Activated CD4-positive, alpha-beta T cell treated with anti-CD3 and anti-CD28 coated beads for 36 hours (primary cell): ENCODE measurements at regions of chr1 and their contacts with region 1.

Region 1: GRCh38 chr1:227563324-227564201 is at the start of gene ZNF678:
- DNase-seq: peak; percentile 95
- ATAC-seq: peak; percentile 96
- H3K4me3 Mint-ChIP-seq: peak within 1 kb of the TSS; percentile 90
- H3K27ac Mint-ChIP-seq: peak within 1 kb of the TSS; percentile 93
- H3K4me1 Mint-ChIP-seq: peaks cover 34% of the 10 kb centered on the region
- H3K27me3 Mint-ChIP-seq: peaks cover 25% of the 10 kb centered on the region
- total RNA-seq, gene ZNF678: 7.0 to 7.7 TPM

Region 2: GRCh38 chr1:227542143-227543120 is 21.1 kb before region 1 on chr1:
- CTCF ChIA-PET with region 1: interaction called, 5 read pairs
- POLR2A ChIA-PET with region 1: interaction called, 3 read pairs
- intact Hi-C with region 1: loop called (anchors 1 to 2 kb)
- DNase-seq: peak; percentile 95
- ATAC-seq: peak; percentile 97
- H3K4me3 Mint-ChIP-seq: peak overlapping the region; percentile 47
- H3K27ac Mint-ChIP-seq: peak overlapping the region; percentile 72
- H3K4me1 Mint-ChIP-seq: peaks cover 4% of the 10 kb centered on the region
- H3K27me3 Mint-ChIP-seq: no peaks in the 10 kb centered on the region

Region 3: DNA sequence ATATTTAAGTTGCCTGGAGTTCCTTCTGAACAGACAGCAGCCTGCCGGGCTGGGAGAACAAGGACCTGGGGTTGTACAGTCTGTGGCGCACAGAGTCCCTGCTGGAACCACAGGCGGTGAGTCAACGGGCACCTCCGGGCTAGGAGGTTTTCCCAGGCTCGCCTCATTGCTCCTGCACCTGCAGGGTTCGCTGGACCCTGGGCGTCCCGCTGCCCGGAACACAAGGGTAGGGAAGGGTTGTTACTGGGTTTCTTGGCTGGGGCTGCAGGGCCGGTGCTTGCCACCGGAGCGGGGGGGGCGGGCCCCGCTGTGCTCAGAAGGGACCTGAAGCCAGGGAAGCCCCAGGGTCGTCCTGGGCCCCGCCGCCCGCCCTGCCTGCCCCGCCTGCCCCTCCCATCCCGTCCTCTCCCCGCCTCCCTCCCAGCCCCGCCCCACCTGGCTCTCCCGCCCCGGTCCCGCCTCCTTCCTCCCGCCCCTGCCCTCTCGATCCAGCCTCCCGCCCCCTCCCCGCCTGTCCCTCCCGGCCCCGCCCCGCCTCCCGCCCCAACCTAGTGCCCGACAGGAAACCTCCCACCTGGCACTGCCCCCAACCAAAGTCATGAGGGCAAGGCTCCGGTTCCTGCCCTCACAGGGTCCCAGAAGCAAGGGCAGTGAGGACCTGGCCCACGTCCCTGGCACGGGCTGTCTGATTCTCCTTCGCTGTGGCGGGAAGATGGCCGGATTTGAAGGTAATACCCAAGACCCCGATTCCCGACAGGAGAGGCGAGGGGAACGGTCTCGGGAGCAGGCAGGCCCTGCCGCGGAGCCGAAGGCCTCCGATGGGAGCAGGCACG is 164.7 kb after region 1 on chr1:
- CTCF ChIA-PET with region 1: no interaction called
- POLR2A ChIA-PET with region 1: no interaction called
- intact Hi-C with region 1: loop called (anchors 1 to 10 kb)
- DNase-seq: peak; percentile 89
- ATAC-seq: peak; percentile 62
- H3K4me3 Mint-ChIP-seq: peak overlapping the region; percentile 76
- H3K27ac Mint-ChIP-seq: peak overlapping the region; percentile 81
- H3K4me1 Mint-ChIP-seq: peaks cover 16% of the 10 kb centered on the region
- H3K27me3 Mint-ChIP-seq: peaks cover 3% of the 10 kb centered on the region

Region 4: DNA sequence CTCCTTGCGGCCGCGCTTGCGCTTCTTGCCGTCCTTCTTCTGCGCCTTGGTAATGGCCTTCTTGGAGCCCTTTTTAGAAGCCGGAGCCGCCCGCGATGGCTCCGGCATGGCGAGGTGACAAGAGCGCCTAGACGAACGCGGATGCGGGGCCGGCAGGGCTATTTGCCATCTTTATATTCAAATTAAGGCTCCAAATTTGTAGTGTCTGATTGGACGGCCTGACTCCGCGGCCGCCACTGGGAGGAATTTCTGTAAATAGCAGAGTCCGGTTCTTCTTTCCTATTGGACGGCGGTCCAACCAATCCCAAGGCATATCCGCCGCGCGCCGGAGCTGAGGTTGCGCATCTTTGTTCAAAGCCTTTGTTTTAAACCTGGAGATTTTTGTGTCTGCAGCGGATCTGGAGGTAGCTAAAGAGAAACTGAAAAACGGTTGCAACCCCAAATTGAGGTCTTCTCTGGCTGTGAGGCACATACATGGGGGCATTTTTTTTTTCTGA is 901.0 kb after region 1 on chr1:
- CTCF ChIA-PET with region 1: no interaction called
- POLR2A ChIA-PET with region 1: no interaction called
- intact Hi-C with region 1: loop called in 1 of 2 experiments (anchors 5 kb)
- DNase-seq: peak; percentile 95
- ATAC-seq: peak; percentile 83
- H3K4me3 Mint-ChIP-seq: peak overlapping the region; percentile 84
- H3K27ac Mint-ChIP-seq: peak overlapping the region; percentile 92
- H3K4me1 Mint-ChIP-seq: peaks cover 50% of the 10 kb centered on the region
- H3K27me3 Mint-ChIP-seq: peaks cover 2% of the 10 kb centered on the region